ENCODE measurements at regions of chr4 and their contacts with region 1.

Region 1: GRCh38 chr4:162497564-162498167 is 333.9 kb upstream of the FSTL5 start:
- DNase-seq: peak; percentile 4
- H3K4me3 ChIP-seq: no peak overlapping the region
- H3K27ac ChIP-seq: no peak overlapping the region
- H3K27me3 ChIP-seq: no peaks in the 10 kb centered on the region
- CTCF ChIP-seq: peak; percentile 81

Region 2: DNA sequence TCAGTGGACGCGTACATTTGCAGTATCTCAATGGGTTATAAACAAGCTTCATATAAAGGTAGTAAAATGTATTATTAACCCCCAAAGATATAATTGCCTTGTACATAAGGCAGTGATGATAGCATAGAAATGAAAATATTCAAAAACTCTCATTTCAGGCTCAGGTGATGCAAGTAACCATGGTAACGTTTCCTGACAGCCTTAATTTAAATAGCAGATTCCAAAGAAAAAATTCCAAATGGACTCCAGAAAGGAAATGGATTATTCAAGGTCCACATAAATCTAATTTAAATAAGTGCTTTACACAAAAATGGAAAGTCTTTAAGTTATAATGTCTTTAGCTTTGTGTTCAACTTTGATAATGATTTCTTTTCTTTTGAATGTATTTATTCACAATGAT is 15.1 kb after region 1 on chr4:
- CTCF ChIA-PET with region 1: interaction called, 11 read pairs
- POLR2A ChIA-PET with region 1: no interaction called
- DNase-seq: no peak
- H3K4me3 ChIP-seq: no peak overlapping the region
- H3K27ac ChIP-seq: no peak overlapping the region
- H3K27me3 ChIP-seq: no peaks in the 10 kb centered on the region
- CTCF ChIP-seq: no peak

Region 3: GRCh38 chr4:163332500-163333406 is 835.1 kb after region 1 on chr4 and contains the start of gene NPY1R:
- CTCF ChIA-PET with region 1: interaction called, 25 read pairs
- POLR2A ChIA-PET with region 1: no interaction called
- DNase-seq: peak; percentile 36
- H3K4me3 ChIP-seq: peak within 1 kb of the TSS; percentile 65
- H3K27ac ChIP-seq: no peak within 1 kb of the TSS
- H3K27me3 ChIP-seq: peaks cover 22% of the 10 kb centered on the region
- CTCF ChIP-seq: peak; percentile 79
- polyA plus RNA-seq, gene NPY1R: not detected in 2 replicates